ENCODE measurements at regions of chr17 and their contacts with region 1.

Region 1: DNA sequence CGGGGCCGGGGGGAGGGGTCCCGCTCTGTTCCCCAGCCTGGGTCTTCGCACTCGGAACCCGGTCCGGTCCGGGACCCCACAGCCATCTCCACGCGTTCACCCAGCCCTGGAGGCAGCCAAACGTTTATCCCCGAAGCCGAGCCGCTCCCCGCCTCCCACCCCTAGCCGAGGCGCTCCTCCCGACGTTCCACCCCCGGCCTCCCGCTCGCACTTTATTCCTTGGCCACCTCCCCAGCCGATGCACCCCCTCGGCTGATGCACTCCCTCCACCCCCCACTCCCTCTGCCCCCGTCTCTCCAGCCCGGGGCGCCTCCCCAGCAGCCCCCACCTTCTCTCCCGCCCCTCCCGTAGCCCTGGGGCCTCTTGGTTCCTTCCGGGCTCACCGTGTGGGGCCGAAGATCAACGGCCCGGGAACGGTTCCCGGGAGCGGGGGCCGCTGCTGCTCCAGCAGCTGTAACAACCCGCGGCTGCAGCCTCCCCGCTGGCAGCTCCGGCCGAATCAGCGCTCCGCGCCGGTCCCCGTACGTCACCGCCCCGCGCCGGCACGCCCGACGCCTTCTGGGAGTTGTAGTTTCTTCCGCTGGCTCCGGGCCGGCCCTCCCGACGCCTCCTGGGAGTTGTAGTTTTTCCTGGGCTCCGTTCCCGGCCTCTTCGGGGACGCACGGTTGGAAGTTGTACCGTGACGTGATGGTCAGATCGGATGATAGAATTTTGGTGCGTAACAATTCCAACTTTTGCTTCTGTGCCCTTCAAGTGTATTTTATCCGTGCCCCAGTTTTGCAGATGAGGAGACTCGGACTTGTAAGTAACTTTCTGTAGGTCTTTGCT is at the starts of genes LRRC3C and ORMDL3:
- DNase-seq: peak; percentile 83 to 95 (median 88)
- ATAC-seq: peak; percentile 76
- H3K4me3 ChIP-seq: peak within 1 kb of the TSS; percentile 89
- H3K4me3 Mint-ChIP-seq: peak within 1 kb of the TSS; percentile 92
- H3K27ac ChIP-seq: peak within 1 kb of the TSS; percentile 63 to 90
- H3K27ac Mint-ChIP-seq: peak within 1 kb of the TSS; percentile 93
- H3K4me1 ChIP-seq: peaks cover 55% of the 10 kb centered on the region
- H3K4me1 Mint-ChIP-seq: peaks cover 53% of the 10 kb centered on the region
- H3K27me3 ChIP-seq: no peaks in the 10 kb centered on the region
- H3K27me3 Mint-ChIP-seq: no peaks in the 10 kb centered on the region
- CTCF ChIP-seq: no peak
- total RNA-seq, gene LRRC3C: not detected
- total RNA-seq, gene ORMDL3: 103 to 105 TPM

Region 2: DNA sequence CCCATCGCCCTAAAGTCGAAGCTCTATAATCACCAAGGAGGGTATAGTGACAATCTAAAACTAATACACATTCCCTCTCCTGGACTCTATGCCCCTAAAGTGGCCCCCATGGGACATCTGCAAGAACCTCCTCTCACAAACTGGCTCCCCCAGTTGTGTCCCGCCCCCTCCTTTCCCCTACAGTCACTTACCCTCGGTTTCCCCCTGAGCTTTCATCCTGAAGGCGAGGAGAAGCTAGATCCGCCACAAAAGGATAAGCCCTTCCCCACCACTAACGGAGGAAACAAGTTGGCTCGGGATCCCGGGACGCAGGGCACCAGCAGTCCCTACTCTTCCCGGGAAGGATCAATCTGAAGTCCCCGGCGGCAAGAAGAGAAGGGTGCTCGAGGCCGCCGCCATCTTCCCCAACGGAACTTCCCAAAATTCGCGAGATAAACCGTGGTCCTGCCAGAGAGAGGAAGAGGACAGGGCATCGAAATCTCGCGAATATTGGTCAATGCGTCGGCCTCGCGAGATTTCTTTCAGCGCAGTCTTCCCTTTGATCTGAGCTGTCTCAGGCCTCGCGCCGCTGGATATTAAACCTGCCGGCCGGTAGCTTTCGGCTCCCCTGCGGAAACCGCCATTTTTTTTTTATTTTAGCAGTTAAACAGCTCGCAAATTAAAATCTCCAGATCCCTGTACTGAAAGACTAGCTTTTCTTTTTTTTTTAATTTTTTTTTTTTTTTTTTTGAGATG is 476.3 kb before region 1 on chr17 and contains the start of gene MED1:
- CTCF ChIA-PET with region 1: interaction called, 3 read pairs
- POLR2A ChIA-PET with region 1: interaction called, 3 read pairs
- intact Hi-C with region 1: loop called in 1 of 2 experiments (anchors 10 kb)
- DNase-seq: peak; percentile 80 to 98 (median 86)
- ATAC-seq: peak; percentile 92
- H3K4me3 ChIP-seq: peak within 1 kb of the TSS; percentile 75
- H3K4me3 Mint-ChIP-seq: peak within 1 kb of the TSS; percentile 99
- H3K27ac ChIP-seq: peak within 1 kb of the TSS; percentile 80 to 82
- H3K27ac Mint-ChIP-seq: peak within 1 kb of the TSS; percentile 99
- H3K4me1 ChIP-seq: peaks cover 22% of the 10 kb centered on the region
- H3K4me1 Mint-ChIP-seq: peaks cover 29% of the 10 kb centered on the region
- H3K27me3 ChIP-seq: no peaks in the 10 kb centered on the region
- H3K27me3 Mint-ChIP-seq: no peaks in the 10 kb centered on the region
- CTCF ChIP-seq: no peak
- total RNA-seq, gene MED1: 24.7 to 28.7 TPM

Region 3: DNA sequence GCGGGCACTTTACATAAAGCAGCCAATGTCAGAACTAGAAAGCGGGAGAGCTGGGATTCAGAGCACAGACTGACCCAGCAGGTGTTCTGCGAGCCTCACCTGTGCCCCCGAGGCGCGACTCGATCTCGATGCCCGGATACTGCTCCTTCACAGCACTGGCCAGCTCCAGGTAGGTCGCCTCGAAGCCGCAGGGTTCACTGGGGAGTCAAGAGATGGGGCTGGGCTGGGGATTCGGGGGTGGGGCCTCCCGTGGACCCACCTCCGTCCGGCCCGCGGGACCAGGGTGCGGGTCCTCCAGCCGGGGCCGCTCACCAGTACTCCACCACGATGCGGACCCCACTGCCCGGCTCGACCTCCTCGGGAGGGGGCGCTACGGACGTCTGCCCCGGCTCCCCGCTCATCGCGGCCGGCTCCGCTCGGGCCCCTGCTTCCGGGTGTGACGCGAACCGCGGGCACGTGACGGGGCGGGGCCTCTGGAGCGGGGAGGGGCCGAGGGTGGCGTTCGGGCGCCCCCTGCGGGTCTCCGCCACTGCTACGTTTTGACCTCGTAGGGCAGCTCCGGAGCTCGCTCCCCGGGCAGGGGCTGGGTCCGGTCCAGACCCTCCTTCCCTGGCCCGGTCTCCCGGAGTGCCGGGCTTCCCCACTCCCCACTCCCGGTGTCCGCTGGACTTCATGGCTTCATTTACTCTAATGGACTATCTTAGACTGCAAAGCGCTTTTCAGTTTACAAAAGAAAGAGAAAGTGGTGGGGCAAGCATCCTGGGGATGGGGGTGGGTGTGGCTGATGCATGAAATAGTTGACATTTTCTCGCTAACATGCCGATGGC is 197.0 kb before region 1 on chr17 and contains the start of gene MIEN1:
- CTCF ChIA-PET with region 1: interaction called, 5 read pairs
- POLR2A ChIA-PET with region 1: interaction called, 13 read pairs
- intact Hi-C with region 1: loop called in 1 of 2 experiments (anchors 1 kb)
- DNase-seq: peak; percentile 86 to 98 (median 94)
- ATAC-seq: peak; percentile 91
- H3K4me3 ChIP-seq: peak within 1 kb of the TSS; percentile 79
- H3K4me3 Mint-ChIP-seq: peak within 1 kb of the TSS; percentile 91
- H3K27ac ChIP-seq: peak within 1 kb of the TSS; percentile 90 to 91
- H3K27ac Mint-ChIP-seq: peak within 1 kb of the TSS; percentile 88
- H3K4me1 ChIP-seq: peaks cover 23% of the 10 kb centered on the region
- H3K4me1 Mint-ChIP-seq: peaks cover 17% of the 10 kb centered on the region
- H3K27me3 ChIP-seq: no peaks in the 10 kb centered on the region
- H3K27me3 Mint-ChIP-seq: no peaks in the 10 kb centered on the region
- CTCF ChIP-seq: peak; percentile 91
- total RNA-seq, gene MIEN1: 31.5 to 32.3 TPM

Region 4: DNA sequence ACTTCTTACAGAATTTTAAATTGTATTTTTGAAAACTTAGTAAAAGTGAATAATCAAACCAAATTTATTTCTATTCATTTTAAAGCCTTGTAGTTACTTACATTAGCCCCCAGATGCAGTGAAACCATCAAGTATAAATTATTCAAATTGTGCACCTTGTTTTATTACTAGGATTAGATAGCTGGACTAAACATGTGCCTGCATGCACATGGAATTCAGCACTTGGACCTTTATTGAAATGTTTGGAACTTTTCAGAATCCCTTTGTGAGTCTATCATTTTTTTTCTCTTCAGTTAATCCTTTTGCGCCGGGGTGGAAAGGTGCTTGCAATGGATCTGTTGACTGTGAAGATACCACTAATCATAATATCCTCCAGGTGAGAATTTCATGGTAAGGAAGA is 54.6 kb before region 1 on chr17:
- CTCF ChIA-PET with region 1: no interaction called
- POLR2A ChIA-PET with region 1: no interaction called
- intact Hi-C with region 1: loop called (anchors 5 kb)
- DNase-seq: peak in 2 of 14 experiments; percentile 39 to 52
- ATAC-seq: peak; percentile 57
- H3K4me3 ChIP-seq: no peak overlapping the region
- H3K4me3 Mint-ChIP-seq: no peak overlapping the region
- H3K27ac ChIP-seq: no peak overlapping the region
- H3K27ac Mint-ChIP-seq: no peak overlapping the region
- H3K4me1 ChIP-seq: peaks cover 10% of the 10 kb centered on the region
- H3K4me1 Mint-ChIP-seq: peaks cover 9% of the 10 kb centered on the region
- H3K27me3 ChIP-seq: no peaks in the 10 kb centered on the region
- H3K27me3 Mint-ChIP-seq: no peaks in the 10 kb centered on the region
- CTCF ChIP-seq: peak; percentile 47

Region 5: DNA sequence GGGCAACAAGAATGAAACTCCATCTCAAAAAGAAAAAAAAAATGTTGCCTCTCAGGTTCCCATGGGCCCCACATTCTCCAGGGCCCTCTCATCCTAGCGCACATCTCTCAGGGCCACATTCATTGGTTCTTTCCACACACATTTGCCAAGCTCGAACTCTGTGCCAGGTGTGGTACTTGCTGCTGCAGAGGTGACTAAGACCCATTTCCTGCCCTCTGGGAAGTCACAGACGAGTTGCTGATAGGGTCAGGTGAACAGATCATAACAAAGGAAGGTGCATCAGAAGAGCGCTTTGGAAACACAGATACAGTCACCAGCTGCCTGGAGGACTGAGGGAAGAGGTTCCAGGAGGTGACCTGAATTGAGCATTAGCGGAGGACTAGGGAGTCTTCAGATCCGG is 36.5 kb after region 1 on chr17:
- CTCF ChIA-PET with region 1: no interaction called
- POLR2A ChIA-PET with region 1: interaction called, 4 read pairs
- intact Hi-C with region 1: loop called in 1 of 2 experiments (anchors 5 kb)
- DNase-seq: peak in 13 of 14 experiments; percentile 16 to 68 (median 52)
- ATAC-seq: peak; percentile 71
- H3K4me3 ChIP-seq: no peak overlapping the region
- H3K4me3 Mint-ChIP-seq: no peak overlapping the region
- H3K27ac ChIP-seq: no peak overlapping the region
- H3K27ac Mint-ChIP-seq: peak overlapping the region; percentile 30
- H3K4me1 ChIP-seq: peaks cover 38% of the 10 kb centered on the region
- H3K4me1 Mint-ChIP-seq: peaks cover 37% of the 10 kb centered on the region
- H3K27me3 ChIP-seq: no peaks in the 10 kb centered on the region
- H3K27me3 Mint-ChIP-seq: no peaks in the 10 kb centered on the region
- CTCF ChIP-seq: no peak

Region 6: GRCh38 chr17:40098846-40099618 is 171.7 kb after region 1 on chr17:
- CTCF ChIA-PET with region 1: no interaction called
- POLR2A ChIA-PET with region 1: interaction called, 3 read pairs
- intact Hi-C with region 1: loop called in 1 of 2 experiments (anchors 5 kb)
- DNase-seq: peak; percentile 99 to 100 (median 99)
- ATAC-seq: peak; percentile 63
- H3K4me3 ChIP-seq: peak overlapping the region; percentile 85
- H3K4me3 Mint-ChIP-seq: peak overlapping the region; percentile 97
- H3K27ac ChIP-seq: peak overlapping the region; percentile 94 to 96
- H3K27ac Mint-ChIP-seq: peak overlapping the region; percentile 91
- H3K4me1 ChIP-seq: peaks cover 97% of the 10 kb centered on the region
- H3K4me1 Mint-ChIP-seq: peaks cover 90% of the 10 kb centered on the region
- H3K27me3 ChIP-seq: no peaks in the 10 kb centered on the region
- H3K27me3 Mint-ChIP-seq: no peaks in the 10 kb centered on the region
- CTCF ChIP-seq: no peak